H1 (cell line): ENCODE measurements at regions of chr1 and their contacts with region 1.

Region 1: GRCh38 chr1:24847995-24848881 is 81.8 kb downstream of the RUNX3 start:
- DNase-seq: peak; percentile 90 to 99
- H3K4me3 ChIP-seq: peak overlapping the region; percentile 26 to 65 (median 48)
- H3K27ac ChIP-seq: no peak overlapping the region
- H3K4me1 ChIP-seq: peaks cover 0 to 2% (median 0%) of the 10 kb centered on the region in 4 experiments; a peak in 2 of 7 replicates
- H3K27me3 ChIP-seq: peaks cover 0 to 13% (median 6%) of the 10 kb centered on the region in 4 experiments; a peak in 4 of 7 replicates
- CTCF ChIP-seq: peak; percentile 90 to 96 (median 93)
- EP300 ChIP-seq: no peak
- POLR2A ChIP-seq: peak; percentile 36 to 64; a peak in 2 of 3 replicates
- RAD21 ChIP-seq: peak; percentile 87 to 90

Region 2: DNA sequence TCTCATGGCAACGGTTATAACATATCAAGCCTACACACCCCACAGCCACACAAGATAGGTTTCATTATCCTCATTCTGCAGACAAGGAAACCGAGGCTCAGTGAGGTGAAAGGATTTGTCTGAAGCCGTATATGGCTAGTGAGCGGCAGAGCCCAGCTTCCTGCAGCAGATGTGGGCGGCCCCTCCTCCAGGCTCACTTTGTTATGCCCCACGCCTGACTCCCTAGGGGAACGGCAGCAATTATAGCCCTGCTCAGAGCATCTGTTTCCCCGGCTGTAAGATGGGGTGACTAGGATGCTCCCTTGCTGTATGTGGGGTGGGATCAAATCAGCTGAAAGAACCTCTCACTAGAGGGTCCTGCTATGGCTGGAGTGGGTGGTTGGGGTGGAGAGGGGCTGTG is 507.0 kb before region 1 on chr1:
- CTCF ChIA-PET with region 1: no interaction called
- POLR2A ChIA-PET with region 1: no interaction called
- DNase-seq: no peak
- H3K4me3 ChIP-seq: no peak overlapping the region
- H3K27ac ChIP-seq: no peak overlapping the region
- H3K4me1 ChIP-seq: peaks cover 0 to 36% (median 24%) of the 10 kb centered on the region in 4 experiments; a peak in 6 of 7 replicates
- H3K27me3 ChIP-seq: no peaks in the 10 kb centered on the region
- CTCF ChIP-seq: no peak
- EP300 ChIP-seq: no peak
- POLR2A ChIP-seq: no peak
- RAD21 ChIP-seq: no peak

Region 3: GRCh38 chr1:24695202-24695974 is 152.8 kb before region 1 on chr1:
- CTCF ChIA-PET with region 1: interaction called, 10 read pairs
- POLR2A ChIA-PET with region 1: no interaction called
- DNase-seq: no peak
- H3K4me3 ChIP-seq: no peak overlapping the region
- H3K27ac ChIP-seq: no peak overlapping the region
- H3K4me1 ChIP-seq: peaks cover 0 to 6% (median 3%) of the 10 kb centered on the region in 4 experiments; a peak in 4 of 7 replicates
- H3K27me3 ChIP-seq: no peaks in the 10 kb centered on the region
- CTCF ChIP-seq: no peak
- EP300 ChIP-seq: no peak
- POLR2A ChIP-seq: no peak
- RAD21 ChIP-seq: no peak

Region 4: GRCh38 chr1:24830680-24831272 is 17.5 kb before region 1 on chr1:
- CTCF ChIA-PET with region 1: interaction called, 11 read pairs
- POLR2A ChIA-PET with region 1: no interaction called
- DNase-seq: no peak
- H3K4me3 ChIP-seq: no peak overlapping the region
- H3K27ac ChIP-seq: no peak overlapping the region
- H3K4me1 ChIP-seq: no peaks in the 10 kb centered on the region; a peak in 1 of 7 replicates
- H3K27me3 ChIP-seq: no peaks in the 10 kb centered on the region
- CTCF ChIP-seq: peak in 2 of 3 experiments; percentile 43 to 59; a peak in 2 of 4 replicates
- EP300 ChIP-seq: no peak
- POLR2A ChIP-seq: no peak
- RAD21 ChIP-seq: peak; percentile 74 to 84

Region 5: GRCh38 chr1:24861821-24862727 is 13.8 kb after region 1 on chr1:
- CTCF ChIA-PET with region 1: interaction called, 12 read pairs
- POLR2A ChIA-PET with region 1: interaction called, 6 read pairs
- DNase-seq: peak in 1 of 2 experiments; percentile 50
- H3K4me3 ChIP-seq: no peak overlapping the region
- H3K27ac ChIP-seq: no peak overlapping the region
- H3K4me1 ChIP-seq: peaks cover 0 to 4% (median 4%) of the 10 kb centered on the region in 4 experiments; a peak in 3 of 7 replicates
- H3K27me3 ChIP-seq: peaks cover 0 to 4% (median 0%) of the 10 kb centered on the region in 4 experiments; a peak in 2 of 7 replicates
- CTCF ChIP-seq: no peak
- EP300 ChIP-seq: no peak
- POLR2A ChIP-seq: no peak
- RAD21 ChIP-seq: no peak

Region 6: GRCh38 chr1:24872061-24872850 is 24.0 kb after region 1 on chr1:
- CTCF ChIA-PET with region 1: interaction called, 13 read pairs
- POLR2A ChIA-PET with region 1: interaction called, 3 read pairs
- DNase-seq: no peak
- H3K4me3 ChIP-seq: no peak overlapping the region
- H3K27ac ChIP-seq: no peak overlapping the region
- H3K4me1 ChIP-seq: peaks cover 0 to 2% (median 0%) of the 10 kb centered on the region in 4 experiments; a peak in 2 of 7 replicates
- H3K27me3 ChIP-seq: peaks cover 0 to 3% (median 0%) of the 10 kb centered on the region in 4 experiments; a peak in 1 of 7 replicates
- CTCF ChIP-seq: no peak
- EP300 ChIP-seq: no peak
- POLR2A ChIP-seq: no peak
- RAD21 ChIP-seq: no peak